GM10248 (cell line): ENCODE measurements at regions of chr19 and their contacts with region 1.

Region 1: GRCh38 chr19:4267101-4267900 is 11.8 kb upstream of the SHD start:
- DNase-seq: peak; percentile 78
- CTCF ChIP-seq: peak; percentile 75

Region 2: GRCh38 chr19:4208385-4209094 is 58.8 kb before region 1 on chr19:
- CTCF ChIA-PET with region 1: no interaction called
- POLR2A ChIA-PET with region 1: no interaction called
- DNase-seq: peak; percentile 48
- CTCF ChIP-seq: peak; percentile 61

Region 3: GRCh38 chr19:4246767-4247593 is 20.3 kb before region 1 on chr19 and contains the start of gene YJU2:
- CTCF ChIA-PET with region 1: interaction called, 13 read pairs
- POLR2A ChIA-PET with region 1: no interaction called
- DNase-seq: peak; percentile 100
- CTCF ChIP-seq: peak; percentile 58

Region 4: DNA sequence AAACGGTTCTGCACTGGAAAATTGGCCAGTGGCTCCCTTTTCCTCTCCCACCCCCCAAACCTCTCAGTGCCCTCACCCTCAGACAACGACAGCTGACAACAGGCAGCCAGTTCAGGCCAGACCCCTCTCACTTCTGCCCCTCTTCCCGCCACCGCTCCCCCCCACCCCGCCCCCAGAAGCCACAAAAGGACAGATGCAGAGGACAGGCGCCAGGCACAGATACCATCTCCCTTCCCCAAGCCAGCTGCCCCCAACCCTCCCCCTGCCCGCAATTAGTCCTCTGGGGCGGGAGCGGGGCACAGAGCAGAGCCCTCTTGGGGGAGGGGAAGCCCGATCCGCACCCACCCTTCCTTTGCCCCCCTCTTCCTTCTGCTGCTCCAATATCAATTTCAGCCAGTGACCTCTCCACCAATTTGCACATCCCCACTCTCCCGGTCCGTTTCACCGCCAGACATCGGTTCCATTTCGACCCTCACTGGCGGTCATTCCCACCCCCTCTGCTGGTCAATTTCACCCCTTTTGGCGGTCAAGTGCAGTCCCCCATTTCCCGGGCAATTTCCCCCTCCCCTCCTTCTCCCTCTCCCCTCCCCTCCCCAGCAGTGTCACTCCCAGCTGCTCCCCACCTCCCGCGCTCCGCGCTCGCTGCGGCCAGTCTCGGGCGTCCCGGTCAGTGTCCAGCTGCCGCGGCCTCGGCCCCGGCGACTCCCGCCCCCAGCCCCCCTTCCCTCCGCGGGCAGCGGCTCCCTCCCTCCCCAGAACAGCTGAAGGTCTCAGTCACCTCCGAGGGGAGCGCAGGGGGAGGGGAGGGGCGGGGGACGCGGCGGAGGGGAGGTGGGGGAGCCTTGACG is 11.3 kb after region 1 on chr19 and contains the start of gene SHD:
- CTCF ChIA-PET with region 1: interaction called, 21 read pairs
- POLR2A ChIA-PET with region 1: no interaction called
- DNase-seq: no peak
- CTCF ChIP-seq: no peak

Region 5: DNA sequence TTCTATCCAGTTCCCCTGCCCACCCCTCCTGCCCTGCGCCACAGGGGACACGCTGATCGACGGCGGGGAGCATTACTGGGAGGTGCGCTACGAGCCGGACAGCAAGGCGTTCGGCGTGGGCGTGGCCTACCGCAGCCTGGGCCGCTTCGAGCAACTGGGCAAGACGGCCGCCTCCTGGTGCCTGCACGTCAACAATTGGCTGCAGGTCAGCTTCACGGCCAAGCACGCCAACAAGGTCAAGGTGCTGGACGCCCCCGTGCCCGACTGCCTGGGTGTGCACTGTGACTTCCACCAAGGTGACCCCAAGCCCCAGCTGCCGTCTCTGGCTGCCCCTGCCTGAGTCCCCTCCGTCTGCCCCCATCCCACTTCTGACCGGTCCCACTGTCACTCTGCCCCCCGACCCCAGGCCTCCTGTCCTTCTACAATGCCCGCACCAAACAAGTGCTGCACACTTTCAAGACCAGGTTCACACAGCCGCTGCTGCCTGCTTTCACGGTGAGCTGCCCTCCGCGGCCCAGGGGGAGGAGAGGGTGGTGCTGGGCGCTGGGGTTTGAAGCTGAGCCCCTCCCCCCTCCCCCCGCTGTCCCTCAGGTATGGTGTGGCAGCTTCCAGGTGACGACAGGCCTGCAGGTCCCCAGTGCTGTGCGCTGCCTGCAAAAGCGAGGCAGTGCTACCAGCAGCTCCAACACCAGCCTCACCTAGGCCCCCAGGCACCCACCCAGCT is 55.8 kb after region 1 on chr19:
- CTCF ChIA-PET with region 1: interaction called, 11 read pairs
- POLR2A ChIA-PET with region 1: no interaction called
- DNase-seq: no peak
- CTCF ChIP-seq: no peak

Region 6: GRCh38 chr19:4352701-4353121 is 85.4 kb after region 1 on chr19:
- CTCF ChIA-PET with region 1: interaction called, 47 read pairs
- POLR2A ChIA-PET with region 1: no interaction called
- DNase-seq: peak; percentile 77
- CTCF ChIP-seq: peak; percentile 69

Region 7: GRCh38 chr19:4400135-4400936 is 133.0 kb after region 1 on chr19 and contains the start of gene SH3GL1:
- CTCF ChIA-PET with region 1: interaction called, 11 read pairs
- POLR2A ChIA-PET with region 1: interaction called, 5 read pairs
- DNase-seq: peak; percentile 91
- CTCF ChIP-seq: peak; percentile 100